Activated CD8-positive, alpha-beta T cell treated with anti-CD3 and anti-CD28 coated beads, Interleukin-2, amount 10 ng/mL, durations not matched to agents 7 days and 5 days (primary cell): ENCODE measurements at regions of chr3 and their contacts with region 1.

Region 1: DNA sequence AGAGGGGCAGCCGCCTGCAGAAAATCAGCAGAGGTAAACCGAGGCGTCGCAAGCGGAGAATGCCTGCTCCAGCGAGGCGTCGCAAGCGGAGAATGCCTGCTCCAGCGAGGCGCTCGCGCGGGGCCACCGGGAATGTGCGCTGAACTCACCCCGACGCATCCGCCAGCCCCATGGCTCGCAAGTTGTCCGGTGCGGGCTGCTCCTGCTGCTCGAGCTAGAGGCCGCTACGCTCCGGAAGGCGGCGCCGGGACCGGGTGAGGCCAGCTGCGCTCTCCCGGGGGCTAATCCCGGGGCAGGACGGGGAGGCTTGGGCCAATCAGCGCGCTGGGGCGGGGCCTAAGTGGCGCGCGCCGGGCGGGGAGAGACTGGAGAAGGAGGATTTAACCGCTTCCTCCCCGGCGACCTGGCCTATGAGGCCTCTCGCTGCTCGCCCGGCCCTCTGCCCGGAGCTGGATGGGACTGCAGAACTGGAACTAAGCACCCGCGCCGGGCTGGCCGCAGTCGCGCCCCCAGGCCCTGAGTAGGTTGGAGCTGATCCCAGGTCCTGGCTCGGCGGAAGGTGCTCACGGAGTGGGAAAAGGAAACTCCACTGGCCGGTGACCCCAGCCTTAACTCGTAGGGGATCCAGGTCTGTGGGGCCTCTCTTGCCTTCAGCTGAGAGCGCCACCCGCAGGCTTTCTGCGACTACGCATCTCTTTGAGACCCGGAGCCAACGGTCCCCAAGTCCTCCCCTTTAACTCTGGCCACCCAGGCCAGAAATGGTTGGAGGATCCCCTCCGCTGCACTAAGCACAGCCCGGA is at the start of gene SLC26A6:
- DNase-seq: peak; percentile 95
- ATAC-seq: peak; percentile 97
- H3K4me3 Mint-ChIP-seq: peak within 1 kb of the TSS; percentile 89
- H3K27ac Mint-ChIP-seq: peak within 1 kb of the TSS; percentile 87
- H3K4me1 Mint-ChIP-seq: peaks cover 30% of the 10 kb centered on the region
- H3K27me3 Mint-ChIP-seq: no peaks in the 10 kb centered on the region
- total RNA-seq, gene SLC26A6: 58.0 to 61.5 TPM

Region 2: GRCh38 chr3:48459773-48460516 is 175.5 kb before region 1 on chr3:
- CTCF ChIA-PET with region 1: no interaction called
- POLR2A ChIA-PET with region 1: no interaction called
- DNase-seq: no peak
- ATAC-seq: no peak
- H3K4me3 Mint-ChIP-seq: no peak overlapping the region
- H3K27ac Mint-ChIP-seq: no peak overlapping the region
- H3K4me1 Mint-ChIP-seq: peaks cover 19% of the 10 kb centered on the region
- H3K27me3 Mint-ChIP-seq: no peaks in the 10 kb centered on the region

Region 3: GRCh38 chr3:48556793-48557626 is 78.4 kb before region 1 on chr3 and contains the start of gene PFKFB4:
- CTCF ChIA-PET with region 1: interaction called, 23 read pairs
- POLR2A ChIA-PET with region 1: interaction called, 3 read pairs
- DNase-seq: peak; percentile 100
- ATAC-seq: peak; percentile 92
- H3K4me3 Mint-ChIP-seq: peak within 1 kb of the TSS; percentile 85
- H3K27ac Mint-ChIP-seq: peak within 1 kb of the TSS; percentile 83
- H3K4me1 Mint-ChIP-seq: peaks cover 66% of the 10 kb centered on the region
- H3K27me3 Mint-ChIP-seq: peaks cover 3% of the 10 kb centered on the region
- total RNA-seq, gene PFKFB4: 42.8 to 49.1 TPM

Region 4: GRCh38 chr3:48609088-48610005 is 26.1 kb before region 1 on chr3 and contains the start of gene UQCRC1:
- CTCF ChIA-PET with region 1: interaction called, 29 read pairs
- POLR2A ChIA-PET with region 1: no interaction called
- DNase-seq: peak; percentile 95
- ATAC-seq: peak; percentile 100
- H3K4me3 Mint-ChIP-seq: peak within 1 kb of the TSS; percentile 91
- H3K27ac Mint-ChIP-seq: peak within 1 kb of the TSS; percentile 93
- H3K4me1 Mint-ChIP-seq: peaks cover 21% of the 10 kb centered on the region
- H3K27me3 Mint-ChIP-seq: no peaks in the 10 kb centered on the region
- total RNA-seq, gene UQCRC1: 196 to 202 TPM

Region 5: GRCh38 chr3:48623851-48624547 is 11.4 kb before region 1 on chr3:
- CTCF ChIA-PET with region 1: interaction called, 42 read pairs
- POLR2A ChIA-PET with region 1: interaction called, 4 read pairs
- DNase-seq: no peak
- ATAC-seq: no peak
- H3K4me3 Mint-ChIP-seq: no peak overlapping the region
- H3K27ac Mint-ChIP-seq: peak overlapping the region; percentile 47
- H3K4me1 Mint-ChIP-seq: peaks cover 13% of the 10 kb centered on the region
- H3K27me3 Mint-ChIP-seq: no peaks in the 10 kb centered on the region

Region 6: GRCh38 chr3:48747015-48747615 is 111.7 kb after region 1 on chr3:
- CTCF ChIA-PET with region 1: no interaction called
- POLR2A ChIA-PET with region 1: no interaction called
- DNase-seq: no peak
- ATAC-seq: no peak
- H3K4me3 Mint-ChIP-seq: no peak overlapping the region
- H3K27ac Mint-ChIP-seq: no peak overlapping the region
- H3K4me1 Mint-ChIP-seq: no peaks in the 10 kb centered on the region
- H3K27me3 Mint-ChIP-seq: no peaks in the 10 kb centered on the region